ENCODE measurements at regions of chr18 and their contacts with region 1.

Region 1: DNA sequence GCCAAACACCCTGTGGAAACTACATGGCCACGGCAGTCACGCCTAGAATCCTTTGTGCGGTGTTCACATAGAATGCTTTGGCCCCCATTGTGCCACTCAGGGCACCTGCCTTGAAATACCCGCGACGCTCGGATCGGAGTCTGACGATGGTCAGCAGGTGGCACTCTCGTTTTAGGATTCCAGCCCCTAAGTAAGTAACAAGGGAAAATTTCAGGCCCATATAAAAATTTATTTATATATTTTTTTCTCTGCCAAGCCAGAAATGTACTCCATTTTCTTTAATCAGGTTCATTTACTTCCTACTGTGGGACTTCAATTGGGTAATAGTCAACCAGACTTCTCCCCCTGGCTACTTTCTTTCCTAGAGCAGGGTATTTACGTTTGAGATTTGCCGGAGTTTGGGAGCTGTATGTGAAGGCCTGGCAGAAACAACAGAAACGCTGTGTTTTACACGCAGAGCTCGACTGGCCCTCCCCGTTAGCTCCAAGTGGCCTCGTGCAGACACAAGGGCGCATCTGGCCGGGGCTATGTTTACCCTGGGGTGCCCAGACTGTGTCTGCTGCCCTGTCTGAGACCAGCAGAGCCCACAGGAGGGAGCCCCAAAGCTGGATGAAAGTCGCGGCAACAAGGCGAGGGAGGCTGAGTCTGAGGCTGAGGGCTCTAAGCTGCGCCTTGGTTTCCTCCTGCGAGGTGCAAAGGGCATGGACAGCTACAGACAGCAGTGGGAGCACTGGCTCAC is 41.6 kb downstream of the LRRC30 start:
- DNase-seq: peak; percentile 75
- ATAC-seq: peak; percentile 76
- H3K4me3 ChIP-seq: peak overlapping the region; percentile 19
- H3K27ac ChIP-seq: peak overlapping the region; percentile 72
- H3K4me1 ChIP-seq: peaks cover 15% of the 10 kb centered on the region
- H3K27me3 ChIP-seq: no peaks in the 10 kb centered on the region
- CTCF ChIP-seq: peak; percentile 55

Region 2: GRCh38 chr18:7566567-7567473 is 294.3 kb after region 1 on chr18 and contains the start of gene PTPRM:
- intact Hi-C with region 1: loop called (anchors 10 kb)
- DNase-seq: peak; percentile 94
- ATAC-seq: peak; percentile 93
- H3K4me3 ChIP-seq: peak within 1 kb of the TSS; percentile 85
- H3K27ac ChIP-seq: peak within 1 kb of the TSS; percentile 96
- H3K4me1 ChIP-seq: peaks cover 26% of the 10 kb centered on the region
- H3K27me3 ChIP-seq: no peaks in the 10 kb centered on the region
- CTCF ChIP-seq: no peak
- total RNA-seq, gene PTPRM: 99.3 TPM

Region 3: GRCh38 chr18:7577706-7578356 is 305.4 kb after region 1 on chr18:
- intact Hi-C with region 1: no loop called
- DNase-seq: no peak
- ATAC-seq: peak; percentile 29
- H3K4me3 ChIP-seq: no peak overlapping the region
- H3K27ac ChIP-seq: no peak overlapping the region
- H3K4me1 ChIP-seq: peaks cover 17% of the 10 kb centered on the region
- H3K27me3 ChIP-seq: no peaks in the 10 kb centered on the region
- CTCF ChIP-seq: no peak